Thyroid gland (tissue), 4 donors: ENCODE measurements at regions of chr2 and their contacts with region 1.

Region 1: DNA sequence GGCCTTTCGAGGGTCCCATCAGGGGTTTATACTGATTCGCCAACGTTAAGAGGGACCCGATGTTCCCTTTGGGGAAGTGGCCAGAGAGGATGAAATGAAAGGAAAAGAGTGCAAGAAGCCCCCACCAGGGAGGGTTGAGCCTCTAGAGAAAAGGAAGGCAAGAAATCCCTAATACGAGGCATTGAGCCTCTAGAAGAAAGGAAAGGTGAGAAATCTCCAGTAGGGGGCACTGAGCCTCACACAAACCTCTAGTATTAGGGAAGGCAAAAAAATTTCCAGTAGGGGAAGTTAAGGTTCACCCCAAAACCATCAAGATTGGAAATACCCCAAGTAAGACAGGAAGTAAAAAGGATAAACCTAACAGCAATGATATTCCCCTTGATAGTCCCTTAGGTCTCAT is 9.8 kb upstream of the SAP130 start:
- DNase-seq: no peak
- H3K4me3 ChIP-seq: no peak overlapping the region
- H3K27ac ChIP-seq: no peak overlapping the region
- H3K4me1 ChIP-seq: no peaks in the 10 kb centered on the region
- H3K27me3 ChIP-seq: no peaks in the 10 kb centered on the region
- CTCF ChIP-seq: no peak
- POLR2A ChIP-seq: no peak

Region 2: DNA sequence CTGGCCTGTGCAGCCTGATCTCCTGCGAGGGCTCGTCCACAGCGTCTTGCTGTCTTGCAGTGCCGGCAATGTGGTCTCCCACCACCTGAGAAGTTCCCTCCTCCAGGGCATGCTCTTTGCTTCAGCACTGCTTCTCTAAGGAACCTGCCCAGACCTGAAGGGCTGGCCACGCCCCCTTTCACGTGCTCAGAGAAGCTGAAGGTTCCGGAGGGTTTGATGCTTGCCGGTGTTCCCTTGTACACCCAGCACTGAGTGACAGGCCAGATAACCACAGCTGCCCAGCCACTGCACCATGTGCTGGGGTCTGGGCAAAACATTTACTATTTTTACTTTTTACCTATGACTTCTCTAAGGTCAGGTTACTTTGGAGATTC is 177.9 kb before region 1 on chr2:
- intact Hi-C with region 1: loop called (anchors 10 kb)
- DNase-seq: peak; percentile 90
- H3K4me3 ChIP-seq: no peak overlapping the region
- H3K27ac ChIP-seq: no peak overlapping the region
- H3K4me1 ChIP-seq: peaks cover 13 to 16% of the 10 kb centered on the region in 2 donors
- H3K27me3 ChIP-seq: no peaks in the 10 kb centered on the region
- CTCF ChIP-seq: no peak
- POLR2A ChIP-seq: no peak